IMR-90 (cell line): ENCODE measurements at regions of chr2 and their contacts with region 1.

Region 1: DNA sequence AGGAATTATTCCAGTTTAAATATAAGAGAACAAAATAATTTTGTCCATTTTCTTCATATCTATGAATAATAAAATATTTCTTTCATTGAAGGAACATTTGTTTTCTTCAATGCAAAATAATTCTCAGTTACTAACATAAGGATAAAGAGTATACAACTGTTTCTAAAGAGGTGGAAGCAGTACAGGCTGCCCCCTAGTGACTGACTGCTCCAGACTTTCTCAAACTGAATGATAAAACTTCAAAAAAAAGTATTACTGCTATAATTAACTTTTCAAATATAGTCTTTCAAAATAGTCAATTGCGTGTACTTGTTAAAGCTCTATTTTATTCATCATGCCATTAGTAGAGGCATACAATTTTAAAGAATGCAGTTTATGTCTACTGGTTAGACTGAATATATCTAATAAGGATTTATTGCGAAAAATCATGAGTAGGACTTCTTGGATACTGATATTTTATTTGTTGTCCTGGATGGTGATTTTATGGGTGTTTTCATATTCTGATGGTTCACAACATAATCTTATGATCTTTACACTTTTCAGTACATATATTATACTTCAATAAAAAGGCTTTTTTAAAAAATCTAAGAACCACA is 100.1 kb downstream of the WDPCP start:
- DNase-seq: peak; percentile 46
- ATAC-seq: peak; percentile 74; the same call in 1 of the 2 replicates
- H3K4me3 ChIP-seq: no peak overlapping the region
- H3K27ac ChIP-seq: no peak overlapping the region
- H3K4me1 ChIP-seq: no peaks in the 10 kb centered on the region
- H3K27me3 ChIP-seq: no peaks in the 10 kb centered on the region
- CTCF ChIP-seq: peak; percentile 69
- POLR2A ChIP-seq: no peak
- RAD21 ChIP-seq: peak; percentile 68

Region 2: GRCh38 chr2:63078852-63079606 is 409.2 kb before region 1 on chr2:
- CTCF ChIA-PET with region 1: no interaction called
- POLR2A ChIA-PET with region 1: no interaction called
- dilution Hi-C with region 1: no loop called
- in situ Hi-C with region 1: no loop called
- intact Hi-C with region 1: loop called (anchors 5 kb)
- DNase-seq: no peak
- ATAC-seq: no peak
- H3K4me3 ChIP-seq: no peak overlapping the region
- H3K27ac ChIP-seq: no peak overlapping the region
- H3K4me1 ChIP-seq: no peaks in the 10 kb centered on the region
- H3K27me3 ChIP-seq: peaks cover 5% of the 10 kb centered on the region; the same call in 1 of the 2 replicates
- CTCF ChIP-seq: peak; percentile 29
- POLR2A ChIP-seq: no peak
- RAD21 ChIP-seq: peak; percentile 23; the same call in 1 of the 2 replicates

Region 3: GRCh38 chr2:63189026-63189425 is 299.2 kb before region 1 on chr2:
- CTCF ChIA-PET with region 1: no interaction called
- POLR2A ChIA-PET with region 1: no interaction called
- dilution Hi-C with region 1: no loop called
- in situ Hi-C with region 1: no loop called
- intact Hi-C with region 1: loop called (anchors 10 kb)
- DNase-seq: peak; percentile 44
- ATAC-seq: peak; percentile 94
- H3K4me3 ChIP-seq: no peak overlapping the region
- H3K27ac ChIP-seq: no peak overlapping the region
- H3K4me1 ChIP-seq: no peaks in the 10 kb centered on the region
- H3K27me3 ChIP-seq: no peaks in the 10 kb centered on the region
- CTCF ChIP-seq: peak; percentile 65
- POLR2A ChIP-seq: no peak
- RAD21 ChIP-seq: peak; percentile 66

Region 4: DNA sequence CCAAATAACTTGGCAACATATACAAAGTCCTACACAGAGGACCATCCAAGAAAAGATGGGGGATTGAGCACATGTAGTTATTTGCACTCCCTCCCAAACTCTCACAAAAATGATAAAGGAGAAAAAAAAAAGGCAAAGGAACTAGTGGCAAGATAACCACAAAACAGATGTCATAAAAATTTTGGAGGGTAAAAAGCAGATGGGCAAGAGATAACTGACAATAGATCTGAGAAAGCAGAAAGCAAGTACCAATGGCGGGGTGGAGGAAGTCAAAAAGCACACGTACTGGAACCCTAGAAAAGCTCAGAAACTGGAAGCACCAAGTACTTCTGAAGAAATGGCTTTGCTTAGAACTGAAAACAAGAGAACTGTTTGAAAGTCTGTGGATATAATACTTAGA is 18.1 kb after region 1 on chr2:
- CTCF ChIA-PET with region 1: no interaction called
- POLR2A ChIA-PET with region 1: no interaction called
- dilution Hi-C with region 1: no loop called
- in situ Hi-C with region 1: no loop called
- intact Hi-C with region 1: no loop called
- DNase-seq: no peak
- ATAC-seq: no peak
- H3K4me3 ChIP-seq: no peak overlapping the region
- H3K27ac ChIP-seq: no peak overlapping the region
- H3K4me1 ChIP-seq: no peaks in the 10 kb centered on the region
- H3K27me3 ChIP-seq: no peaks in the 10 kb centered on the region
- CTCF ChIP-seq: no peak
- POLR2A ChIP-seq: no peak
- RAD21 ChIP-seq: no peak